Endothelial cell of umbilical vein (primary cell): ENCODE measurements at regions of chr17 and their contacts with region 1.

Region 1: DNA sequence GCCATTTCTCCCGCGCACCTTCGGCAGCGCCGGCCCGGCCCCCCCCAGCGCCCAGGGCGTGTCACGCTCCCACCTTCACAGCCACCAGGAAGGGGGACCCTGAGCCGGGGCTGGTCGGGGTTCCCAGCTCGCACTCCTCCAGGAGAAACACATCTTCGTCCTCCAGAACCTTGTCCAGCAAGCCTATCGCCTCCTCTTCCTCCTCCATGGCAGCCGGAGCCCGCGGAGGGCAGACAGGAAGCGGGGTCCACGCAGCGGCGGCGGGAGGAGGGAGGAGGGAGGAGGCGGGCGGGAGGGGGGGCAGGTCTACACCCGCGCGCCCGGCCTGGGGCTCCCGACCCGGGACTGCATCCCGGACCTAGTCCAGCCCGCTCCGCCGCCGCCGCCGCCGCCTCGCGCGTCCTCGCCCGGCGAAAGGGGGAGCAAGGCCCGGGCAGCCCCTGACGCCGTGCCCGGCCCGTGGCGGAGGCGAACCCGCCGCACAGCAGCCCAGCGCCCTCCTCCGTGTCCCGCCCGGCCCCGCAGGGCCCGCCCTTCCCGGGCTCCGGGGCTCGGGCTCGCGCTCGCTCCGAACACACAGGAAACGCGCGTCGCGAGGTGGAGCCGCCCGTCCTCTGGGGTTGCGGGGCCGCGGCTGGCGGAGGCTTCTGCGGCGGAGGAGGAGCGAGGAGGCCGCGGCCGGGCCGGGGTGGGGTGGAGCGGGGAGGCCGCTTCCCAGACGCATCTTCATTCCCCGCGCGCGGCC is 70.7 kb downstream of the ABR start:
- DNase-seq: peak; percentile 42
- H3K4me3 ChIP-seq: peak overlapping the region; percentile 64 to 75 (median 72)
- H3K27ac ChIP-seq: peak overlapping the region; percentile 49
- H3K4me1 ChIP-seq: peaks cover 35% of the 10 kb centered on the region
- H3K27me3 ChIP-seq: no peaks in the 10 kb centered on the region
- CTCF ChIP-seq: no peak
- POLR2A ChIP-seq: no peak

Region 2: GRCh38 chr17:1005361-1005946 is 103.6 kb before region 1 on chr17:
- CTCF ChIA-PET with region 1: no interaction called
- POLR2A ChIA-PET with region 1: no interaction called
- dilution Hi-C with region 1: no loop called
- intact Hi-C with region 1: loop called (anchors 2 kb)
- DNase-seq: peak; percentile 93
- H3K4me3 ChIP-seq: no peak overlapping the region
- H3K27ac ChIP-seq: peak overlapping the region; percentile 75
- H3K4me1 ChIP-seq: peaks cover 62% of the 10 kb centered on the region
- H3K27me3 ChIP-seq: no peaks in the 10 kb centered on the region
- CTCF ChIP-seq: no peak
- POLR2A ChIP-seq: peak; percentile 51

Region 3: DNA sequence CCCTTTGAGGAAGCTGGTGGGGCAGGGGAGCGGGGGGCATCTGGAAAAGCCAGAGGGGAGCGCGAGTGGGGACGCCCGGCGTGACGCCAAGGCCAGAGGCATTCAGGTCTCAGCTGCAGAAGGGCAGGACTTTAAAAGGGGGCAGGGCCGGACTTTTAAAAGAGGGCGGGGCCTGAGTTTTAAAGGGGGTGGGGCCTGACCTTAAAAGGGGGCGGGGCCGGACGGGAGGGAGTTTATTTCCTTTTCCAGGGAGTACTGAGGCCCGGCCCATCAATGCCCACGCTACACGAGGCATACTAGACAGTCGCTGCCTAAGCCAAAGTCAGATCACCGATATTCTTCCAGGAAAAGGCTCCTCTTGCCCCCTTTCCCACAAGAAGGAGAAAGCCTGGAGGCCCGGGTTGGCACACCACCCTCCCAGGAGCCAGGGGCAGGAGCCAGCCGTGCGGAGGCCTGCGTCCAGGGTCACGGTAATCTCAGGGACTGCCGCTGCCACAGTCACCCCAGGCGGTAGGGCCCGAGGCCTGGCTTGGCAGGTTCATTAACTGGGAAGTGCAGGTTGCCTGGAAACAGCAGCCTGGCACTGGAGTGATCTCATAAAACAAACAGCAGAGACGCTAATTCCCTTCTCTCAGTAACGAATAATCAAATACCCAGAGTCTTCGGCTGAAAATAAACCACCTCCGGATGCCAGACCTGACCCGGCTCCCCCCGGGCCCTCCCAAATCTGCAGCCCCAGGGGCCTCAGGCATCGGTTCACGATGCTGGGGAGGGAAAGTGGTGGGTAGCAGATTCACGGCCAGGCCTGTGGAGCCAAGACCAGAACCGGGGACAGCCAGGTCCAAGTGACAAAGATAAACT is 21.4 kb before region 1 on chr17:
- CTCF ChIA-PET with region 1: interaction called, 4 read pairs
- POLR2A ChIA-PET with region 1: no interaction called
- dilution Hi-C with region 1: no loop called
- intact Hi-C with region 1: loop called (anchors 1 kb)
- DNase-seq: peak; percentile 84
- H3K4me3 ChIP-seq: peak overlapping the region in 1 of 3 experiments; percentile 9
- H3K27ac ChIP-seq: peak overlapping the region; percentile 95
- H3K4me1 ChIP-seq: peaks cover 25% of the 10 kb centered on the region
- H3K27me3 ChIP-seq: no peaks in the 10 kb centered on the region
- CTCF ChIP-seq: no peak
- POLR2A ChIP-seq: no peak

Region 4: DNA sequence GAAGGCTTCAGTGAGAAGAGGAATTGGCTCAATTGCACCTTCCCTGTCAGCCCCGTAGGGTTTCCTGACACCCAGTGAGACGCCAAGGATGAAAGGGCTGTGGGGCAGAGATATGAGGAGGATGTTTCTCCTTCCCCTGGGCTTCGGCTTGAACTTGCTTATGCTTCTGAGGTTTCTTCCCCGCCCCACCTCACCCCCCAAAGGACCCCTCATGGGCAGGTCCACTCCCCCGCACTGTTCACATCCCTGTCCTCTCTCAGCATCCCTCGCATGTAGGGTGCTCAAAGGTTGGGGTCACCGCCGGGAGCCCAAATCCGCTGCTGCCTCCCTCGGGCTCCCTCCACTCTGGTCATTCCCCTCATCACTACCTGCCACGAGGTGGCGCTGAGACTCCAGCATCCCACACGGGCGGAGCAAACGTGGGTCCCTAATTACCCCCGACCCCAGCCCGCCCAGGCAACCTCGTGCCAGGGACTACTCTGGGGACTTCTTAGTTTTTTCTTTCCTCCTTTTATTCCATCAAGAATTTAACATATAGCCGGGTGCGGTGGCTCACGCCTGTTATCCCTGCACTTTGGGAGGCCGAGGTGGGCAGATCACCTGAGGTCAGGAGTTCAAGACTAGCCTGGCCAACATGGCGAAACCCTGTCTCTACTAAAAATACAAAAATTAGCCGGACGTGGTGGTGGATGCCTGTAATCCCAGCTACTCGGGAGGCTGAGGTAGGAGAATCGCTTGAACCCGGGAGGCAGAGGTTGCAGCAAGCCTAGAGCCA is 167.1 kb after region 1 on chr17:
- CTCF ChIA-PET with region 1: no interaction called
- POLR2A ChIA-PET with region 1: no interaction called
- dilution Hi-C with region 1: no loop called
- intact Hi-C with region 1: no loop called
- DNase-seq: peak; percentile 30
- H3K4me3 ChIP-seq: no peak overlapping the region
- H3K27ac ChIP-seq: no peak overlapping the region
- H3K4me1 ChIP-seq: no peaks in the 10 kb centered on the region
- H3K27me3 ChIP-seq: peaks cover 8 to 11% of the 10 kb centered on the region in 2 experiments
- CTCF ChIP-seq: peak; percentile 50 to 90
- POLR2A ChIP-seq: no peak